ENCODE measurements at regions of chr1 and their contacts with region 1.

Region 1: DNA sequence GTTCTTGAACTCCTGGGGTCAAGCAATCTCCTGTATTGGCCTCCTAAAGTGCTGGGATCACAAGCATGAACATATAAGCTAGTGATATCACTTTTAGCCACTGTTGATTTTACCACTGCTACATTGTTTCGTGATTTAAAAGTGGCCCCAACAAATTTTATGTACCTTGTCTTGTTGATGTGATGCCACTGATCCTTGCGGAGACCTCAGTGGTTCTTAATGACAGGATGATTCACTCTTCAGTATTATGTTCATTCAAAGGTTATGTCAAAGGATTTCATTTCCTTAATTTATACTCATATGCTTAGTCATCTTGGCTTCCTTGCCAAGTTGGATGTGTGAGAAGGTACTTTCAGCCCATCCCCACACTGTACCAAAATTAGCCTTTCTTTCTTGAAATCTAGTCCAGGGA is 12.1 kb downstream of the PRKACB start:
- DNase-seq: no peak
- H3K4me3 ChIP-seq: no peak overlapping the region
- H3K4me1 ChIP-seq: no peaks in the 10 kb centered on the region
- H3K27me3 ChIP-seq: no peaks in the 10 kb centered on the region

Region 2: DNA sequence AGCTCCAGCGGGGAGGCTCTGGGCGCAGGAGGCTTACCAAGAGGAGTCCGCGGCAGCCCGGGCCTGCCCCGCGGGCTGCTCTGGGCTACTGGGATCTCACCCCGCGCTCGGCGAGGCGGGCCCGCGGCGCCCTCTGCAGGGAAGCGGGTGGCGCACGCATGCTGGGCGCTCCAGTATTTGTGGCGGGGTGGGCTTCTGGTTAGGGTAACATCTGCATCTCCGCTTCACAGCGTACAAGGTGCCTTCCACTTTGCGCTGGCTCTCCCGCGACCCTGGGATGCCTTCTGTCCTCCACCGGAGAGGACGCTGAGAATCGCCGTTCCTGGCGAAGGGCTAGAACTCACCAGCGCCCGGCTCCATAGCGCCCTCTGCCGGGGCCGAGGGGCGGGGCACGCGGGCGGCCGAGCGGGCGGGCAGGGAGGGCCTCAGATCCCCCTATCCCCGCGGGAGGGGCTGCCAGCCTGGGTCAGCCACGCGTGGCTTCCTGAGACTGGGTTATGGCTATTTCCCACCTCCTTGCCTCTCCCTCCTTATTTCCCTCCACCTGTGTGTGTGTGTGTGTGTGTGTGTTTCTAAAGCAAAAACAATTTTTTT is 464.6 kb after region 1 on chr1:
- in situ Hi-C with region 1: loop called (anchors 25 kb)
- DNase-seq: peak; percentile 57 to 87
- H3K4me3 ChIP-seq: peak overlapping the region; percentile 46
- H3K4me1 ChIP-seq: peaks cover 8% of the 10 kb centered on the region
- H3K27me3 ChIP-seq: no peaks in the 10 kb centered on the region